ENCODE measurements at regions of chr10 and their contacts with region 1.

Region 1: GRCh38 chr10:72248468-72249151 is 25.1 kb upstream of the DDIT4 start:
- DNase-seq: peak; percentile 52 to 79
- H3K4me3 ChIP-seq: no peak overlapping the region
- H3K27ac ChIP-seq: peak overlapping the region; percentile 48
- H3K4me1 ChIP-seq: peaks cover 53% of the 10 kb centered on the region
- H3K27me3 ChIP-seq: no peaks in the 10 kb centered on the region
- CTCF ChIP-seq: no peak

Region 2: DNA sequence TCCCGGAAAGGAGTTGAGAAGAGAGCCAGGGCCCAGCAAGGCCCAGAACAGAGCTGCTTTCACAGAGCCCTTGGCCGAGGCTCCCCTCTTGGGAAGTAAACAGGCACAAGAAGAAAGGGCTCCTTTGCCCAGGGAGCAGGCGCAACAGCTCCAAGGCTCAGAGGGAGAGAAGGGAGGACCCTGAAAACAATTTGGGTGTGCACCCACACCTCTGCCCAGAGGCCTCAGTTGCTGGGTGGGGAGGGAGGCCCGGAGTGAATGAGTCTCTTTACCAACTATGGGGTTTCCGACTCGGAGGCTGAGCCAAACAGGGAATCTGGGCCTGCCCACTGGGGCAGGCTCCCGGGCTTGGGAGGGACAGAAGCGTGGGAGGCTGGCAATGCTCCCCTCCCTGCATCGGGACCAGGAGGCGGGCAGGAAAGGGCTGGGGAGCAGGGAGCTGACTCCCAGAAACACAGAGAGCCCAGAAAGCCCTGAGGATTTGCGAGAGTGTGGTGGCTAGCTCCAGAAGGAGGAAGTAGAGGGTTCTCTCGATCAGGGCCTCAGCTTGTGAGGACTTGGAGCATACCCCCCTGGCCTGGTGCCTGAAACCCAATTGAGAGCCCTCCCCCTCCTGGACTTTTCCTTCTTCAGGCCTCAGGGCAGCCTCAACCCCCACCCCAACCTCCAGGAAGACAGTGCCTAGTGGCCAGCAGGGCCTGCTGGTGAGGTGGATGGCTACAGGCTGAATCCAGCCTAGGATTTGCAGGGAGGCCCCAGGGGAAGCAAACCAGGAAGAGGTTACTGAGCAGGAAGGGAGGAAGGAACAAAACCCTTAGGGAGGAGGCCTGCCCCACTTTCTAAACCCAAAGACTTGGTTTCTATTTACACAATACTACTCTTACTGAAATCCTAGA is 535.2 kb before region 1 on chr10:
- CTCF ChIA-PET with region 1: interaction called, 15 read pairs
- POLR2A ChIA-PET with region 1: no interaction called
- intact Hi-C with region 1: no loop called
- DNase-seq: peak; percentile 66 to 77
- H3K4me3 ChIP-seq: no peak overlapping the region
- H3K27ac ChIP-seq: peak overlapping the region; percentile 50
- H3K4me1 ChIP-seq: peaks cover 20% of the 10 kb centered on the region
- H3K27me3 ChIP-seq: no peaks in the 10 kb centered on the region
- CTCF ChIP-seq: no peak; the same call in 1 of the 2 replicates

Measured in PC-9 (cell line).